GM13976 (cell line): ENCODE measurements at regions of chr5 and their contacts with region 1.

Region 1: GRCh38 chr5:139765409-139766217 is 30.0 kb upstream of the PSD2 start:
- DNase-seq: peak; percentile 89
- CTCF ChIP-seq: peak; percentile 96

Region 2: GRCh38 chr5:139403787-139404483 is 361.7 kb before region 1 on chr5 and contains the start of gene SPATA24:
- in situ Hi-C with region 1: loop called (anchors 25 kb)
- DNase-seq: peak; percentile 96
- CTCF ChIP-seq: no peak

Region 3: GRCh38 chr5:139633295-139634027 is 132.2 kb before region 1 on chr5:
- in situ Hi-C with region 1: loop called (anchors 5 kb)
- DNase-seq: peak; percentile 75
- CTCF ChIP-seq: peak; percentile 97

Region 4: DNA sequence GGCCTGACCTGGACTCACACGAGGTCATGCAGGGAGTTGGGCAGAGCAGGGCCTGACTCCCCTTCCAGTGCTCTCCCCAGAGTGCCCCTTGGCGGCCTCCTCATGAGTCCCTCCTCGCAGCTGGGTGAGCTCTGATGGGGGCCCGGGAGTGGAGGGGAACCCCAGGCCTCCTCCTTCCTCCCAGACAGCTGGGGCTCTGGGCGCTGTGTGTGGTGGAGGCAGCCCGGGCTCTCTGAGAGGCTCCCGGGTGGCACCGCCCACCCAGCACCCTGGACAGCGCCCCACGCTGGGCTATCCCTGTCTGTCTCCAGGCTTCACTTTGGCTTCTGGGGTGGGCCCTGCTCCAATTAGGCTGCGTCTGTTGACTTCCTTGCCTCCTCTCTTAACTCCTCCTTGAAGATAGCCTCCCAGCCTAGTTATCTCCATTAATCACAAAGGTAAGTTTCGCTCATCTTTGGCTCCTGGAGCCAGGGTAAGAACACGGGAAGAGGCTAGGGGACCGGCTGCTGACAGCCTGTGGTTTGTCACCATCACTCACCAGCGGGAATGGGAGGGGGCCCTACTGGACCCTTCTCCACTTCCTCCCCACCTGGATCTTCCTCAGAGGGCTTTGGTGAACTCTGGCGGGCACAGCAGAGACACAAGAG is 43.0 kb after region 1 on chr5:
- in situ Hi-C with region 1: no loop called
- DNase-seq: peak; percentile 85
- CTCF ChIP-seq: no peak